IMR-90 (cell line): ENCODE measurements at regions of chr3 and their contacts with region 1.

Region 1: GRCh38 chr3:100761211-100761942 is 52.1 kb downstream of the TFG start:
- DNase-seq: no peak
- ATAC-seq: peak; percentile 37; the same call in 1 of the 2 replicates
- H3K4me3 ChIP-seq: no peak overlapping the region
- H3K27ac ChIP-seq: no peak overlapping the region
- H3K4me1 ChIP-seq: no peaks in the 10 kb centered on the region
- H3K27me3 ChIP-seq: no peaks in the 10 kb centered on the region
- CTCF ChIP-seq: no peak
- POLR2A ChIP-seq: no peak
- RAD21 ChIP-seq: no peak

Region 2: GRCh38 chr3:100796556-100796955 is 35.2 kb after region 1 on chr3:
- CTCF ChIA-PET with region 1: no interaction called
- POLR2A ChIA-PET with region 1: no interaction called
- dilution Hi-C with region 1: no loop called
- in situ Hi-C with region 1: no loop called
- intact Hi-C with region 1: loop called (anchors 5 kb)
- DNase-seq: peak; percentile 47
- ATAC-seq: peak; percentile 52
- H3K4me3 ChIP-seq: no peak overlapping the region
- H3K27ac ChIP-seq: no peak overlapping the region
- H3K4me1 ChIP-seq: no peaks in the 10 kb centered on the region
- H3K27me3 ChIP-seq: no peaks in the 10 kb centered on the region; the same call in 1 of the 2 replicates
- CTCF ChIP-seq: peak; percentile 44
- POLR2A ChIP-seq: no peak
- RAD21 ChIP-seq: peak; percentile 46

Region 3: DNA sequence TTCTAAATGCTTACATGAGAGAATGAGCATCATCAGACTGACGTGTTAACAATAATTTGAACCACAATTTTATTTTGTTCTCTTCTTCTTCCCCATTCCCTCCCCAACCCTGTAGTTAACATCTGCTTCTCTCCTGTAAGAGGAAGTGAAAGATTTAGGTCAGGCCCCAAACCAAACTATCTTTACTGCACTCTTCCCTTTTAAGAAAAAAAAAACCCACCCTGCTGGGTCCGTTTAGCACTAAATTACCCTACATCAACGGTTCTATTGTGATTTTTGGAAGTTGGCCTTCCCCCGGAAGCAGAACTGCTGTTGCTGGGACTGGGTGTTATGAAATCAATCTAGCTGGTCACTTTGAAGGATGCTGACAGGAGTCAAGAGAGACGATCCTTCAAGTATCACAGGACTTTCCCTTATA is 1137.4 kb after region 1 on chr3:
- CTCF ChIA-PET with region 1: no interaction called
- POLR2A ChIA-PET with region 1: no interaction called
- dilution Hi-C with region 1: no loop called
- in situ Hi-C with region 1: no loop called
- intact Hi-C with region 1: no loop called
- DNase-seq: no peak
- ATAC-seq: no peak
- H3K4me3 ChIP-seq: no peak overlapping the region
- H3K27ac ChIP-seq: no peak overlapping the region
- H3K4me1 ChIP-seq: peaks cover 6% of the 10 kb centered on the region
- H3K27me3 ChIP-seq: no peaks in the 10 kb centered on the region
- CTCF ChIP-seq: no peak
- POLR2A ChIP-seq: no peak
- RAD21 ChIP-seq: no peak